HepG2 (cell line): ENCODE measurements at regions of chr6 and their contacts with region 1.

Region 1: DNA sequence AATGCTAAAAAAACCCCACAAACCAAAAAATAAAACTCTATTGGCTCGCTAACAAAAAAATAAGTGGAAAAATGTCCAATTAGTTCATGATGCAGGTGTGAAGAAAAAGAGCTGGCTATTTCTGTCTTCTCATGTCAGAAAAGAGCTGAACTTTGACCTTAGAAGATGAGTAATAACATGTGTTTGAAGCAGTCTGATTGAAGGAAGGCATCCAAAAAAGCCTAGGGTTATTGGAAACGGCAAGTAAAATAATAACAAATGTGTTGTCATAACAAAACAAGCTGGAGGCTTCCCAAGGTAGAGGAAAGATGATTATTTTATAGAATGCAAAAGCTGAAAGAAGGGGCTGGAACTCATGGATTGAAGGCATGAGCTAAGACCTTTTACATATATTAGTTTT is 94.4 kb upstream of the FAM184A start:
- DNase-seq: peak; percentile 67
- ATAC-seq: no peak
- H3K4me3 ChIP-seq: no peak overlapping the region
- H3K27ac ChIP-seq: peak overlapping the region; percentile 74
- H3K4me1 ChIP-seq: peaks cover 83% of the 10 kb centered on the region
- H3K27me3 ChIP-seq: no peaks in the 10 kb centered on the region
- CTCF ChIP-seq: no peak
- EP300 ChIP-seq: peak in 1 of 2 experiments; percentile 39; a peak in 1 of 4 replicates
- POLR2A ChIP-seq: no peak
- RAD21 ChIP-seq: no peak

Region 2: DNA sequence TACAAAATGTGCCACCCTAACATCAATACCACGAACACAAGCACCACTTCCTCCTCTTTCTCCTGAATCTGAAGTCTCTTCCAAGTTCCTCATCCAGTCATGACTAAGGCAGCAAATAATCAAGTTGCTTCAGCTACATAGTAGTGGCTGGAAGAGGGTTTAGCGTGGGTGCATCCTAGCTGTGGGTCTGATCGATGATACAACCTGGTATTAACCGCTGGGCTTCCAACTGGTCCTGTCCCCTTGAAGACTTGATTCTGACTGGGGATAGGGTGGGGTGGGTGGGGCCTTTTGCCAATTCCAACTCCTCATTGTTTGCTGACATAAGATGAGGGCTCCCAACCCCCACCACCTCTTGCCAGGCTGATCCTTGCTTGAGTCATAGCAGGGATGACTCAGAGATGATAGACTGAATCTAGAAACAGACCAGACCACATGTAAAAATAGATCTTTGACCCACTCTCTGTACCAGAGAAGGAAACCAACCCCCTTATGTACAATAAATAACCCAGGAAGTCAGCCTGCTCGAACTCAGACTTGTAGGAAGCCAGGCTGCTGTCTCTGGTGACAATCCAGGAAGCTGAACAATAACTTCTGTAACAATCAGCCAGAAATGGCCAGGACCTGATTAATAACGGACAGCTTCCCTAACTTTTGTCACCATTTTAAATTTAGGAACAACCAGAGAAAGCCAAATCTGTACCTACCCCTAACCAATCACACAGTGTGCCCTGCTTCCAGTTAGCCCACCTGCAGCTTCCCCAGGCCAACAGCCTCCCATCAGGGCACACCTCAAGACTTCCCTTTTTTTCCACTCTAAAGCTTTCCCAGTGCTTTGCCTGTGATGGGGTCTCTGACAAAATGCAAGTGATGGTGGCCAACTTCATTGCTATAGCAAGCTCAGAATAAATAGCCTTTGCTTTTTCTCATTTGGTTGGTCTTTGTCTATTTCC is 25.4 kb before region 1 on chr6:
- CTCF ChIA-PET with region 1: no interaction called
- POLR2A ChIA-PET with region 1: interaction called, 19 read pairs
- in situ Hi-C with region 1: no loop called
- intact Hi-C with region 1: no loop called
- DNase-seq: peak; percentile 92
- ATAC-seq: peak; percentile 82
- H3K4me3 ChIP-seq: no peak overlapping the region
- H3K27ac ChIP-seq: peak overlapping the region; percentile 46
- H3K4me1 ChIP-seq: peaks cover 59% of the 10 kb centered on the region
- H3K27me3 ChIP-seq: no peaks in the 10 kb centered on the region
- CTCF ChIP-seq: no peak
- EP300 ChIP-seq: peak in 1 of 2 experiments; percentile 85; a peak in 2 of 4 replicates
- POLR2A ChIP-seq: no peak
- RAD21 ChIP-seq: no peak

Region 3: GRCh38 chr6:119186490-119186889 is 13.7 kb after region 1 on chr6:
- CTCF ChIA-PET with region 1: no interaction called
- POLR2A ChIA-PET with region 1: no interaction called
- in situ Hi-C with region 1: no loop called
- intact Hi-C with region 1: loop called (anchors 2 kb)
- DNase-seq: no peak
- ATAC-seq: peak; percentile 27
- H3K4me3 ChIP-seq: no peak overlapping the region
- H3K27ac ChIP-seq: no peak overlapping the region
- H3K4me1 ChIP-seq: no peaks in the 10 kb centered on the region
- H3K27me3 ChIP-seq: no peaks in the 10 kb centered on the region
- CTCF ChIP-seq: no peak
- EP300 ChIP-seq: no peak
- POLR2A ChIP-seq: no peak
- RAD21 ChIP-seq: no peak

Region 4: GRCh38 chr6:119205911-119206618 is 33.2 kb after region 1 on chr6:
- CTCF ChIA-PET with region 1: no interaction called
- POLR2A ChIA-PET with region 1: no interaction called
- in situ Hi-C with region 1: no loop called
- intact Hi-C with region 1: no loop called
- DNase-seq: no peak
- ATAC-seq: no peak
- H3K4me3 ChIP-seq: no peak overlapping the region
- H3K27ac ChIP-seq: no peak overlapping the region
- H3K4me1 ChIP-seq: peaks cover 15% of the 10 kb centered on the region
- H3K27me3 ChIP-seq: no peaks in the 10 kb centered on the region
- CTCF ChIP-seq: no peak
- EP300 ChIP-seq: no peak
- POLR2A ChIP-seq: no peak
- RAD21 ChIP-seq: no peak